PC-3 (cell line): ENCODE measurements at regions of chr10 and their contacts with region 1.

Region 1: GRCh38 chr10:79445141-79445976 is at the start of gene ZCCHC24:
- DNase-seq: peak; percentile 100
- ATAC-seq: peak; percentile 78
- H3K4me3 ChIP-seq: peak within 1 kb of the TSS; percentile 70
- H3K27ac ChIP-seq: peak within 1 kb of the TSS; percentile 15
- H3K4me1 ChIP-seq: peaks cover 59% of the 10 kb centered on the region
- H3K27me3 ChIP-seq: no peaks in the 10 kb centered on the region
- CTCF ChIP-seq: no peak
- total RNA-seq, gene ZCCHC24: 32.9 and 40.7 TPM in 2 replicates

Region 2: GRCh38 chr10:79149662-79150443 is 295.5 kb before region 1 on chr10:
- CTCF ChIA-PET with region 1: no interaction called
- POLR2A ChIA-PET with region 1: no interaction called
- intact Hi-C with region 1: loop called (anchors 1 kb)
- DNase-seq: peak; percentile 100
- ATAC-seq: peak; percentile 62
- H3K4me3 ChIP-seq: peak overlapping the region; percentile 2; the same call in 1 of the 2 replicates
- H3K27ac ChIP-seq: peak overlapping the region; percentile 77
- H3K4me1 ChIP-seq: peaks cover 67% of the 10 kb centered on the region
- H3K27me3 ChIP-seq: no peaks in the 10 kb centered on the region
- CTCF ChIP-seq: no peak

Region 3: GRCh38 chr10:79221110-79222051 is 224.0 kb before region 1 on chr10:
- CTCF ChIA-PET with region 1: no interaction called
- POLR2A ChIA-PET with region 1: no interaction called
- intact Hi-C with region 1: no loop called
- DNase-seq: no peak
- ATAC-seq: no peak
- H3K4me3 ChIP-seq: no peak overlapping the region
- H3K27ac ChIP-seq: no peak overlapping the region
- H3K4me1 ChIP-seq: no peaks in the 10 kb centered on the region
- H3K27me3 ChIP-seq: no peaks in the 10 kb centered on the region
- CTCF ChIP-seq: no peak

Region 4: DNA sequence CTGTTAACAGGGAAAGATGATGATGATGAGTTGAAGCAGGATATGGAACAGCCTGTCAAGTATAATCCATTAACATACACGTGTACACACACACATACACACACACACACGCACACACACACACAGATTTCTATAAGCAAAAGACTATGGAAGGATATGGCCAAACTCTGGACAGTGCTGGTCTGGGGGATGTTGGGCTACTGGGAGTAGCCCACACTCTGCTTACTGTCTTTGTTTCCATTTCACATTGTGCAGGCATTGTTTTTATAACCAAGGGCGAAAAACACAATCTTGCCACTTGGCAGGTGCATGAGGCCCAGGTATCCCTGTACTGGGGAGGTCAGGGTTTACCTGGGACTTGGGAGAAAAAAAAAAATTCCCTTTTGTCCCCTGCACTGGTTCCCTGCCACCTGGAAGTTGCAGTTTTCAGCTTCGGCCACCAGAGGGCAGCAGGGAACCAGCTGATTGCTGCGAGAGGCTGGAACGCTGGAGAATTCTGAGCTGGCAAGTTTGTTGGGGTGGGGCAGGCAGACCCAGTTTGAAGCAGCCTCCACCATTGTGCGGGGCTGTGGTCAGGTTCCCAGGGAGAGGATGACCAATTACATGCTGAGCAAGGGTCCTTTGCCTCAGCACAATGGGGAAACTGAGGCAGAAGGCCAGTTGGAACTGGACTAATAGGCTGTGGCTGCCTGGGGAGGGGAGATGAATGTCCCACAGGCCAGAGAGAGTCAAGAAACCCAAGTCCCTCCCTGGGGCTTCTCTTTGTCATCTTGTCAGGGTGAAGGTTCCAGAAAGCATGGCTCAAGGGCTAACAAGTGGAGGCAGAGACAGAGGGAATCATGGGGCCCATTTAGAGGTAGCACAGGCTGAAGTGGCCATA is 70.8 kb before region 1 on chr10:
- CTCF ChIA-PET with region 1: interaction called, 20 read pairs
- POLR2A ChIA-PET with region 1: no interaction called
- intact Hi-C with region 1: loop called (anchors 1 kb)
- DNase-seq: peak; percentile 100
- ATAC-seq: peak; percentile 81
- H3K4me3 ChIP-seq: no peak overlapping the region
- H3K27ac ChIP-seq: no peak overlapping the region
- H3K4me1 ChIP-seq: peaks cover 10% of the 10 kb centered on the region
- H3K27me3 ChIP-seq: no peaks in the 10 kb centered on the region
- CTCF ChIP-seq: peak; percentile 100

Region 5: DNA sequence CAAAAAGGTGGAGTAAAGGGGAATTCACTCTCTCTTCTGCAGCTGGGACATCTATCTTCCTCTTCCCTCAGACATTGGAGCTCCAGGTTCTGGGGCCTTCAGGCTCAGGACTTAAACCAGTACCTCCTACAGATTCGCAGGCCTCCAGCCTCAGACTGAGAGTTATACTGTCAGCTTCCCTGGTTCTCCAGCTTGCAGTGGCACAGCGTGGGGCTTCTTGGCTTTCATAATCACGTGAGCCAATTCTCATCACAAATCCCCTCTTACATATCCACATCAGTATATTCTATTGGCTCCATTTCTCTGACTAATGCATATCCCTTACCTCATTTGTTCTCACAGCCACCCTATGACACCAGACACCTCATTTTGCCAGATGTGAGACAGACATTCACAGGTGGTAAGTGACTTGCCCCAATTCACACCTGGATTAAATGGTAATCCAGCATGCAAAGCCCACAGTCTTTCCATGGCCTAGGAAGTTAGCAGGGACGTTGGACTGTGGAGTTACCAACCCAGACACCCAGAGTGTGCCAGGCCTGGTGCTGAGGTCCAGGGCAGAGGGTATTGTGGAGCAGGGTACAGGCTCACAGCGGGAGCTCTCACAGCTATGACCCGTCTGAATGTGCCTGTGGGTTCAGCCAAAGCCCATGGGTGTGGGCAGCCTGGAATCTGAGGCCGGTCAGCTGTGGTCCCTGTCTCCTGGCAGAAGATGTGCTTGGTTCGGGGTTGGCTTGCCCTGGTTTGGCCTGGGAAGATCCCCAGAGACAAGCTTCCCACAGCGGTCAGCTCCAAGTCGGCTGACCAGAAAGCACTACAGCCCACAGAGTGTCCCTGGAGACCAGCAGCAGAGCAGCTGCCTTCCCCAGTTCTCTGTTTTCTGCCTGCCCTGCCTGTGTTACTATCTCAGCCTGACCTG is 18.5 kb after region 1 on chr10:
- CTCF ChIA-PET with region 1: interaction called, 16 read pairs
- POLR2A ChIA-PET with region 1: no interaction called
- intact Hi-C with region 1: loop called (anchors 2 kb)
- DNase-seq: no peak
- ATAC-seq: no peak
- H3K4me3 ChIP-seq: no peak overlapping the region
- H3K27ac ChIP-seq: no peak overlapping the region
- H3K4me1 ChIP-seq: no peaks in the 10 kb centered on the region
- H3K27me3 ChIP-seq: no peaks in the 10 kb centered on the region
- CTCF ChIP-seq: no peak

Region 6: GRCh38 chr10:79502561-79503309 is 57.4 kb after region 1 on chr10:
- CTCF ChIA-PET with region 1: interaction called, 3 read pairs
- POLR2A ChIA-PET with region 1: no interaction called
- intact Hi-C with region 1: loop called (anchors 5 kb)
- DNase-seq: peak; percentile 96
- ATAC-seq: peak; percentile 98
- H3K4me3 ChIP-seq: peak overlapping the region; percentile 8; the same call in 1 of the 2 replicates
- H3K27ac ChIP-seq: no peak overlapping the region
- H3K4me1 ChIP-seq: peaks cover 1% of the 10 kb centered on the region; the same call in 1 of the 2 replicates
- H3K27me3 ChIP-seq: peaks cover 12% of the 10 kb centered on the region; the same call in 1 of the 2 replicates
- CTCF ChIP-seq: peak; percentile 96

Region 7: DNA sequence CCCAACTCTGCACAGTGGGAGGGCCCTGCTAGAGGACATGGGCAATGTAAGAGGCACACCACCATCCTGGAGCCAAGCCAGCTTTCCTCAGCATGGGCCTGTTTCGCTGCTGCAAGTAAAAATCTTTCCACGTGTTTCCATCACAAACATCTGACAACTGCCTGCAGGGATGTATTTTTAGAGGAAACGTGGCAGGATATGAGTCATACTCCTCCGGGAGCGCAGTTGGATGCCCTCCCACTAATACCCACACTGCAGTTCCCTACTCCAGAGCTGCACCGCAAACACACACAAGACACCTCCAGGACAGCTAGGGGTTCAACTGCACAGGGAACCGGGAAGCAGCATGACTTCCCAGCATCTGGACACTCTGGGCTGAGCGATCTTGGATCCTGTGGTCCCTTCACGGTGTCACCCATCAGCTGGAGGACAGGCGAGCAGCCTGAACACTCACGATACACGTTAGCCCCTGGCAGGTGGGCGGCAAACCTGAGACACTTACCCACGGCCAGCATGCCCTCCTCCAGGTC is 713.3 kb after region 1 on chr10:
- CTCF ChIA-PET with region 1: no interaction called
- POLR2A ChIA-PET with region 1: interaction called, 3 read pairs
- intact Hi-C with region 1: loop called (anchors 1 kb)
- DNase-seq: peak; percentile 100
- ATAC-seq: peak; percentile 70
- H3K4me3 ChIP-seq: peak overlapping the region; percentile 2; the same call in 1 of the 2 replicates
- H3K27ac ChIP-seq: peak overlapping the region; percentile 65
- H3K4me1 ChIP-seq: peaks cover 64% of the 10 kb centered on the region
- H3K27me3 ChIP-seq: no peaks in the 10 kb centered on the region
- CTCF ChIP-seq: no peak

Region 8: DNA sequence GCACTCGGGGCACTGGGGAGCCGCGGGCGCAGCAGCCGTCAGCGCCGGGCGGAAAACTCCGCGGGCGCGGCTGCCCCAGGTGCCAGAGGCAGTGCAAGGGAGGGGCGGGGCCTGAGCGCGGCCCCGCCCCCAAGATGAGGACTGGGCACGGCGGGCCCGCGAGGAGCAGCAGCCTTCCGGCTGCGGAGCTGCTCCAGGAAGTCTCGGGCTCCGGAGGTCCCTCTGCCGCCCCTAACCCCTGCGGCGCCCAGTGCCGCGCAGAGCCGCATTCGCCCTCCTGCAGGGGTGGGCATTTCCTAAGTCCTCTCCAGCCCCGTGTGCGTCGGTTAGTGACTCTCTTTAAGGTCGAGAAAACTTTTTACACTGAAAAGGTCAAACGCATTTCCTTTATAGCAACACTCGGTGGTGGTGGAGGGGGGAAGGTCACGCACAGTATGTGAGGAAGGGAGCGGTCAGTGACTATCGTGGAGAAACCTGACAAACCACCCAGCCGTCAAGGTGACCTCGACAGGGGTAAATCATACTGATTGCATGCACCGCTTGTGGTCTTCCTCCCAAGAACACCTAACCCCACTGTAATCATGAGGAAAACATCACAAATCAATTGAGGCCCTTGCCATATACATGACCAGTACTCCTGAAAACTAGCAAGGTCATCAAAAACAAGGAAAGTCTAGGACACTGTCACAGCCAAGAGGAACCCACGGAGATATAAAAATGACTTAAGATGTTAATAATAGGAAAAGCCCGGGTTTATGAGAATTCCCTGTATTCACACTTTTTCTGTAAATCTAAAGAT is 760.3 kb after region 1 on chr10 and contains the start of gene ANXA11:
- CTCF ChIA-PET with region 1: no interaction called
- POLR2A ChIA-PET with region 1: interaction called, 10 read pairs
- intact Hi-C with region 1: loop called (anchors 2 kb)
- DNase-seq: peak; percentile 100
- ATAC-seq: peak; percentile 52
- H3K4me3 ChIP-seq: peak within 1 kb of the TSS; percentile 69
- H3K27ac ChIP-seq: peak within 1 kb of the TSS; percentile 80
- H3K4me1 ChIP-seq: peaks cover 80% of the 10 kb centered on the region
- H3K27me3 ChIP-seq: no peaks in the 10 kb centered on the region
- CTCF ChIP-seq: peak; percentile 1; the same call in 1 of the 2 replicates
- total RNA-seq, gene ANXA11: 434 and 520 TPM in 2 replicates